ENCODE measurements at regions of chr3 and their contacts with region 1.

Region 1: GRCh38 chr3:137032465-137033120 is 74.8 kb downstream of the IL20RB start:
- DNase-seq: peak; percentile 80
- H3K4me3 ChIP-seq: peak overlapping the region; percentile 32 to 51
- H3K27ac ChIP-seq: no peak overlapping the region
- H3K4me1 ChIP-seq: peaks cover 0 to 4% of the 10 kb centered on the region in 2 experiments; a peak in 1 of 4 replicates
- H3K27me3 ChIP-seq: no peaks in the 10 kb centered on the region
- CTCF ChIP-seq: peak; percentile 79
- EP300 ChIP-seq: no peak
- RAD21 ChIP-seq: peak; percentile 81

Region 2: DNA sequence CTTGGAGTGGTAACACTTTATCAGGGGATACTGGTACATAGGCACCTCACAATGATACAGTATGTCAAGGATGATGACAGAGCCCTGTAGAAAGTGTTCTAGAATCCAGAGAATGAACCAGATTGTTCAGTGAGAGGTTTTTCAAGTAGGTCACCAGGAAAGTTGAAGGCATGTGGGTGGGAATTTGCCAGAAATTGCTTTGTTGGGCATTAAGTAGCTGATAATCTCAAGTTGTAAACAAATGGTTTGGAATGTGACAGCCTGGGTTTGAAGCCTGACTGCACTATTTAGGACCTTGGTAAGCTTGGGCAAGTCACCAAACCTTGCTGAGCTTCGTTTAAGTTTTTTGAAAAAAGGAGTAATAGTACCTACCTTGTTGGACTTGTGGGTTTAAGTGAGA is 201.1 kb before region 1 on chr3:
- CTCF ChIA-PET with region 1: no interaction called
- POLR2A ChIA-PET with region 1: no interaction called
- DNase-seq: no peak
- H3K4me3 ChIP-seq: no peak overlapping the region
- H3K27ac ChIP-seq: no peak overlapping the region
- H3K4me1 ChIP-seq: peaks cover 3 to 19% of the 10 kb centered on the region in 2 experiments; a peak in 3 of 4 replicates
- H3K27me3 ChIP-seq: no peaks in the 10 kb centered on the region
- CTCF ChIP-seq: no peak
- EP300 ChIP-seq: no peak
- RAD21 ChIP-seq: no peak

Region 3: GRCh38 chr3:137013955-137014688 is 18.5 kb before region 1 on chr3:
- CTCF ChIA-PET with region 1: interaction called, 14 read pairs
- POLR2A ChIA-PET with region 1: no interaction called
- DNase-seq: peak; percentile 84
- H3K4me3 ChIP-seq: peak overlapping the region in 1 of 2 experiments; percentile 42; a peak in 2 of 4 replicates
- H3K27ac ChIP-seq: no peak overlapping the region
- H3K4me1 ChIP-seq: peaks cover 5 to 7% of the 10 kb centered on the region in 2 experiments; a peak in 2 of 4 replicates
- H3K27me3 ChIP-seq: no peaks in the 10 kb centered on the region
- CTCF ChIP-seq: peak; percentile 86
- EP300 ChIP-seq: no peak
- RAD21 ChIP-seq: peak; percentile 99

Region 4: DNA sequence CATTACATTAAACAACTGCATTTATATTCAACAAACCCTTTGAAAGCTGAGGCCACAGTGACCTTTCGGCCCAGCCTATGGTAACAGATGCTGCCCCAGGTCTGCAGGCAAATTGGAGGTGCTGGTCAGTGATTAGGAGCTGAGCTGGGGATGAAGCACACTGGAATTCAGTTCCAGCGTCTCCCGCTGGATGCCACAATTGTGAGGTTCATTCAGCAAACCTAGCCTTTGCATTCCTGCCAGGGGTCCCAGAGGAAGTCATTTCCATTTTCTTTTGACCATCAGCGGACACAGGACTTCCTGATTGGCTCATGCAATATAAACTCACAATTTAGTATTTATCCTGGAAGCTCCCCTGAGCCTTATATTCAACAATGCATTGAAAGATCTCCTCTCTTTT is 14.6 kb after region 1 on chr3:
- CTCF ChIA-PET with region 1: interaction called, 16 read pairs
- POLR2A ChIA-PET with region 1: no interaction called
- DNase-seq: no peak
- H3K4me3 ChIP-seq: no peak overlapping the region
- H3K27ac ChIP-seq: no peak overlapping the region
- H3K4me1 ChIP-seq: no peaks in the 10 kb centered on the region
- H3K27me3 ChIP-seq: no peaks in the 10 kb centered on the region
- CTCF ChIP-seq: no peak
- EP300 ChIP-seq: no peak
- RAD21 ChIP-seq: no peak

Region 5: DNA sequence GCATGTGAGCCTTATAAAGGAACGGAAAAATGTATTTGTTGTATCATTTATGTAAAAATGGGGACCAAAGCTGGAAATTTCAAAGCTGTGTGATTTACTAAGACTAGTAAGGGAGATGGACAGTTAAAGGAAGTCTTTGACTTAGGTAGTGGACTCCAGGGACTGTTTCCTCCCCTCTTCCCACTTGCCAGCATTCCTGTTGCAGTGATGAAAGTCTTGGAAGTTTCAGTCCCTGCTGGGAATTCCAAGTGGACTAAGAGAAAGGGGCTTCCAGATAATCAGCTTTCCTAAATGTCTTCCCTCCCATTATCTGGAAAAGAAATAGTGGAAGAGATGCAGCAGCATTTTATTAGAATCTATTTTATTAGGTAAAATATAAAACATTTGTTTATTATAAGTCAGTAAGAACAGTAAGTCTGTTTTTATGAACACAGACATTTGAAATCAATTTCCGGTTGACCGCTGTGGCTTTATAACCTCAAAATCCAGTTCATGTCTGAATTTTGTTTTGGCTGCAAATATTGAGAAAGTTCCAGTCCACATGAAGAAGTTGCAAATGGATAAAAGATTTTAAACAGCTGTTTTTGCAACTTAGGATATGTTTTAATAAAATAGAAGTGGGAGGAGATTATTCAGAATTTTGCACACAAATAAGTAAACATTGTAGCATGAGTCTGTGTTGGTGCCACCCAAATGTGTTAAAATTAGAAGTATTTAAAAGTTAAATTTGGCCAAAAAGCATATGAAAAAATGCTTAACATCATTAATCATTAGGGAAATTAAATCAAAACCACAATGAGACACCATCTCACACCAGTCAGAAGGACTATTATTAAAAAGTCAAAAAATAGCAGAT is 67.0 kb after region 1 on chr3:
- CTCF ChIA-PET with region 1: interaction called, 21 read pairs
- POLR2A ChIA-PET with region 1: no interaction called
- DNase-seq: no peak
- H3K4me3 ChIP-seq: no peak overlapping the region
- H3K27ac ChIP-seq: no peak overlapping the region
- H3K4me1 ChIP-seq: no peaks in the 10 kb centered on the region
- H3K27me3 ChIP-seq: no peaks in the 10 kb centered on the region
- CTCF ChIP-seq: no peak
- EP300 ChIP-seq: no peak
- RAD21 ChIP-seq: no peak

Region 6: GRCh38 chr3:137110484-137110883 is 77.9 kb after region 1 on chr3:
- CTCF ChIA-PET with region 1: interaction called, 21 read pairs
- POLR2A ChIA-PET with region 1: no interaction called
- DNase-seq: peak; percentile 56
- H3K4me3 ChIP-seq: no peak overlapping the region; a peak in 1 of 4 replicates
- H3K27ac ChIP-seq: no peak overlapping the region
- H3K4me1 ChIP-seq: no peaks in the 10 kb centered on the region
- H3K27me3 ChIP-seq: no peaks in the 10 kb centered on the region
- CTCF ChIP-seq: peak; percentile 66
- EP300 ChIP-seq: no peak
- RAD21 ChIP-seq: peak; percentile 79

Region 7: GRCh38 chr3:138051946-138052802 is 1019.6 kb after region 1 on chr3:
- CTCF ChIA-PET with region 1: interaction called, 11 read pairs
- POLR2A ChIA-PET with region 1: interaction called, 3 read pairs
- DNase-seq: peak; percentile 34
- H3K4me3 ChIP-seq: no peak overlapping the region
- H3K27ac ChIP-seq: no peak overlapping the region
- H3K4me1 ChIP-seq: no peaks in the 10 kb centered on the region; a peak in 1 of 4 replicates
- H3K27me3 ChIP-seq: no peaks in the 10 kb centered on the region
- CTCF ChIP-seq: peak; percentile 72
- EP300 ChIP-seq: no peak
- RAD21 ChIP-seq: peak; percentile 70

Measured in SK-N-SH (cell line).